Activated naive CD4-positive, alpha-beta T cell treated with anti-CD3 and anti-CD28 coated beads for 36 hours (primary cell): ENCODE measurements at regions of chr7 and their contacts with region 1.

Region 1: GRCh38 chr7:38369816-38370493 is 96.5 kb upstream of the TARP start:
- DNase-seq: peak; percentile 83
- H3K4me3 Mint-ChIP-seq: no peak overlapping the region
- H3K27ac Mint-ChIP-seq: no peak overlapping the region
- H3K4me1 Mint-ChIP-seq: peaks cover 52% of the 10 kb centered on the region
- H3K27me3 Mint-ChIP-seq: no peaks in the 10 kb centered on the region

Region 2: DNA sequence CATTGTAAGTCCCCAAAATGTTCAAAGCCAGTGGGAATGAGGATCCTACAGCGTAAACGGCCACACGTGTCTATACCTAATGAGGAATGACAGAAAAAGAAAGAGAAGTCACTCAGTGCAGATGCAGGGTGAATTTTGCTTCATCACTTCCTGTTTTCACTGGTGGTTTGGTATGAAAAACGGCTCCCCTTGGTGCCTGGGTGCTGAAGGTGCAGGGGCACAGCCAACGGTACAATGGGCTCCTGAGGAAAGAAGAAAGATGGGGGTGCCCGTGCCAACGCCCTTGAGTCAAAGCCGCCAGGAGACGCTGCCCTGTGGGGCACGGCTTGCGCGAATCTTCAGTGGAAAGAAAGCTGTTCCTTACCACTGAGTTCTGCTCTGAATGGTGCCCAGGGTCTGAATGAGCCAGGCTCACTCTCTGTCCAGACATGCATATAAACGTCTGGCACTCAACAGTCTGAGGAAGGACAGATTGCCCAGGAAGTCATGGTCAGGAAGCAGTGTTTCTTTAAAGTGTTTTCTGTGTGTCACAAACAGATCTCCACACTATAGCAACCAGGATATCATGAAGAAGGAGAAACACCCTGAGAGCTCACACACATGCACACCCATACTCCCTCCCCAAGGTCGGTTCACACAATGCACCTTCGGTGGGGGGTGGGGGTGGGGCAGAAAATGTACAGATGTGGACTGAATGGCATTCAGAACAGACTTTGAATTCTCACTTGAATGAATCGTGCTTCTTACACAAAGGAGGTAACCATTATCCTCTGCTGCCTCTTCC is 1027.1 kb before region 1 on chr7:
- CTCF ChIA-PET with region 1: no interaction called
- intact Hi-C with region 1: loop called (anchors 10 kb)
- DNase-seq: peak; percentile 86
- H3K4me3 Mint-ChIP-seq: peak overlapping the region; percentile 89
- H3K27ac Mint-ChIP-seq: peak overlapping the region; percentile 97
- H3K4me1 Mint-ChIP-seq: peaks cover 81% of the 10 kb centered on the region
- H3K27me3 Mint-ChIP-seq: no peaks in the 10 kb centered on the region

Region 3: GRCh38 chr7:37833107-37833817 is 536.7 kb before region 1 on chr7:
- CTCF ChIA-PET with region 1: no interaction called
- intact Hi-C with region 1: loop called (anchors 5 kb)
- DNase-seq: peak; percentile 57
- H3K4me3 Mint-ChIP-seq: peak overlapping the region; percentile 73
- H3K27ac Mint-ChIP-seq: no peak overlapping the region
- H3K4me1 Mint-ChIP-seq: peaks cover 5% of the 10 kb centered on the region
- H3K27me3 Mint-ChIP-seq: peaks cover 4% of the 10 kb centered on the region

Region 4: DNA sequence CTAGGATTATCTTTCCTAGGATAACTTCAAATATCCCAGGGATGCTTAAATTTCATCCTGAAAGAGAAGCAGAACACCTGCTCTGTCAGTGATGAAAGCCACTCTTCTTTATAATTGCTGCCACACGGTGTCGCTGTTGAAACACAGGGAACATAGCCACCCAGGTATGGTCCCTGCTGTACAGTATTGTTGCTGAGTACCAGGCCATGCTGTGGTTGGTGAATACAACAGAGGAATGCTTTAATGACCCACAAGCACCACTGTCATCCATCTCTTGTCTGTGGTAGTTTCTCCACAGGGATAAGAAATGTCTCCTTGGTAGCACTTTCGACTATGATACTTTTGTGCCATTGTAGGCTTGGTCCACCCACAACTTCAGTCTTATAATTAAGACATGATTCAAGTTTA is 262.5 kb before region 1 on chr7:
- CTCF ChIA-PET with region 1: interaction called, 45 read pairs
- intact Hi-C with region 1: loop called (anchors 1 kb)
- DNase-seq: peak; percentile 84
- H3K4me3 Mint-ChIP-seq: no peak overlapping the region
- H3K27ac Mint-ChIP-seq: no peak overlapping the region
- H3K4me1 Mint-ChIP-seq: no peaks in the 10 kb centered on the region
- H3K27me3 Mint-ChIP-seq: peaks cover 8% of the 10 kb centered on the region

Region 5: GRCh38 chr7:38222481-38223096 is 147.4 kb before region 1 on chr7:
- CTCF ChIA-PET with region 1: interaction called, 190 read pairs
- intact Hi-C with region 1: no loop called
- DNase-seq: peak; percentile 21
- H3K4me3 Mint-ChIP-seq: no peak overlapping the region
- H3K27ac Mint-ChIP-seq: no peak overlapping the region
- H3K4me1 Mint-ChIP-seq: peaks cover 2% of the 10 kb centered on the region
- H3K27me3 Mint-ChIP-seq: no peaks in the 10 kb centered on the region

Region 6: DNA sequence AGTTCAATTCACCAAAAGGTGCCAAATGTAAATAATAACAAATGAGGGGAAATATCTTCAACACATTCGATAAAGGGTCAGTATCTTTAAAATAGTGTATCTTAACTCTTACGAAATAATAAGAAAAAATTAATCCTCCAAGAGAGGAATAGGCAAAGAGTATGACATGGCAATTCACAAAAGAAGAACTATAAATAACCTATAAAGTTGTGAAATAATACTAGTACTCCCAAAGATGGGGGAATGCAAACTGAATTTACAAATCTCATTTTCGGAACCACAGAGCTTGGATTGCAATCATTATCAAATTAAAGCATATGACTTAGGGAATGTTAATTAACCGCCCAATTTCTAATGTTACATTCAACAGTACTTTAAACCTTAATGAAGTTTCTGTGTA is 18.4 kb before region 1 on chr7:
- CTCF ChIA-PET with region 1: interaction called, 19 read pairs
- intact Hi-C with region 1: no loop called
- DNase-seq: no peak
- H3K4me3 Mint-ChIP-seq: peak overlapping the region; percentile 79
- H3K27ac Mint-ChIP-seq: no peak overlapping the region
- H3K4me1 Mint-ChIP-seq: peaks cover 20% of the 10 kb centered on the region
- H3K27me3 Mint-ChIP-seq: no peaks in the 10 kb centered on the region

Region 7: GRCh38 chr7:39589323-39590111 is 1219.6 kb after region 1 on chr7:
- CTCF ChIA-PET with region 1: no interaction called
- intact Hi-C with region 1: loop called (anchors 10 kb)
- DNase-seq: peak; percentile 92
- H3K4me3 Mint-ChIP-seq: no peak overlapping the region
- H3K27ac Mint-ChIP-seq: peak overlapping the region; percentile 52
- H3K4me1 Mint-ChIP-seq: peaks cover 39% of the 10 kb centered on the region
- H3K27me3 Mint-ChIP-seq: no peaks in the 10 kb centered on the region